ENCODE measurements at regions of chr11 and their contacts with region 1.

Region 1: DNA sequence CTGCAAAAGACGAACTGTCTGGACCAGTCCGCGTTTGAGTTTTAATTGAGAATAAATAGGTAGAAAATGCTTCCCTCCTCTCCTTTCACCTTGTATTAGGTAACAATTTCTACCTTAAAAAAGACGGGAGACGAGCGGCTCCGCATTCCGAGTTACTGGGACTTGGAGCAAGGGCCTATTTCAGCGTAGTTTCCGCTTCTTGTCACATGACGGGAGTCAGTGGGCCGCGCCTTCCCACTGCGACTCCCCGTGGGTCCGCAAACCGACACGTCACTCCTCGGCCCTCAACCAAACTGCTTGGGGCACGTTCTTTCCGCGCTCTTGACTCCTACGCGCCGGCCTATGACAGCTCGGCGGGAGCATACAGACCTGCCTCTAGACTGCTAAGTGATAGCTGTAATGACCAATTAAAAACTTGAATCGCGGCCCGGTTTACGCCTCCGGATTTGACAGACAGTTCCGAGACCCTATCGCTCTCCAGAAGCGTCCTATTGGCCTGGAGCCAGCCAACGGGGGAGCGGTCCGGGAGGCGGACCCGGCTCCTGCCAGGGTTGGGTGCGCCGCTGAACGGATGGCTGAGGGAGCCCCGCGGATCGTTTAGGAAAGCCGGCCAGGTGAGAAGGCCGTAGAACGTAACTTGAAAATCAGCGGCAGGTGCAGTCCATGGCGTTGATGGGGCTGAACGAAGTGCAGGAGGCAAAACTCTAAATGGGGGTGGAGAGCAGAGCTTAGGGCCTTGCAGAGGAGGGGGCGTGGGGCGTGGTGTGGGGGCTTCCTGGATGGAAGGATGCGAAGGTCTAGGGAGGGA is at the start of gene STT3A:
- DNase-seq: peak; percentile 100
- H3K4me3 ChIP-seq: peak within 1 kb of the TSS; percentile 77 to 82
- H3K27ac ChIP-seq: peak within 1 kb of the TSS; percentile 92 to 93
- H3K4me1 ChIP-seq: no peaks in the 10 kb centered on the region
- H3K27me3 ChIP-seq: no peaks in the 10 kb centered on the region
- CTCF ChIP-seq: no peak
- POLR2A ChIP-seq: peak; percentile 96
- total RNA-seq, gene STT3A: 90.1 to 124 TPM

Region 2: GRCh38 chr11:125111343-125112207 is 480.9 kb before region 1 on chr11 and contains the start of gene TMEM218:
- intact Hi-C with region 1: loop called (anchors 5 kb)
- DNase-seq: peak; percentile 98
- H3K4me3 ChIP-seq: peak within 1 kb of the TSS; percentile 66 to 93
- H3K27ac ChIP-seq: peak within 1 kb of the TSS; percentile 74 to 88
- H3K4me1 ChIP-seq: peaks cover 3% of the 10 kb centered on the region
- H3K27me3 ChIP-seq: no peaks in the 10 kb centered on the region
- CTCF ChIP-seq: no peak
- POLR2A ChIP-seq: no peak
- total RNA-seq, gene TMEM218: 17.7 to 33.5 TPM

Region 3: DNA sequence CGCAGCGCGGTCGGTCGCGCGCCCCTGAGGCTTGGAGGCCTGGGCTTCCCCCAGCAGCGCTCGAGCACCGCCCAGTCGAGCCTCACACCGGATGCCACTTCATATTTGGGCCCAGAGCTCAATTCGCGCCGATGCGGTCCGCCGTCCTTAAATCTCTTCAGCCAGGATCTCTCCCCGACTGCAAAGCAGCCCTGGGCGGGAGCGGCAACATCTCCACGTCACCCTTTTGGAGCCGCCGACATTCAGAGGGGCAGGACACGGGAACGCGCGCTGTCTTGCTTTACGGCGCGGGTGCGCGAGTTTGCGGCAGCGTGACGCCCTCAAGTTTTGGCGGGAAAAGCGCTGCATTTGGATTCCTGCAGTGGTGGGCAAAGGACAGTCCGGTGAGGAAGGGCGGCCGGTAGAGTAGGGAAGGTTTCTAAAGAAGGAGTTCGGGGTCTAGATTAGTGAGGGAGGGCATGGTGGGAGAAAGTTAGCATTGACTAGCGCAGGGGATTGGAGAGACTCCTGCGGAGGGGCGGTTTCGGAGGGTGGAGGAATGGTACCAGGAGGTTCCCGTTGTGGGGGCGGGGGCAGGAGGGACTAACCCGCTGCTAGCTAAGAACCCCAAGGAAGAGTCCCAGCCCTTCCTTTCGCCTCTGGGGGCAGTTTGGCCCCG is 33.2 kb after region 1 on chr11:
- intact Hi-C with region 1: loop called (anchors 1 kb)
- DNase-seq: peak; percentile 82
- H3K4me3 ChIP-seq: peak overlapping the region; percentile 63 to 66
- H3K27ac ChIP-seq: peak overlapping the region; percentile 94
- H3K4me1 ChIP-seq: no peaks in the 10 kb centered on the region
- H3K27me3 ChIP-seq: no peaks in the 10 kb centered on the region
- CTCF ChIP-seq: peak in 1 of 4 experiments; percentile 15
- POLR2A ChIP-seq: peak; percentile 76

Region 4: GRCh38 chr11:125887373-125888324 is 295.1 kb after region 1 on chr11 and contains the start of gene HYLS1:
- intact Hi-C with region 1: loop called (anchors 5 kb)
- DNase-seq: peak; percentile 92
- H3K4me3 ChIP-seq: peak within 1 kb of the TSS; percentile 62 to 89
- H3K27ac ChIP-seq: peak within 1 kb of the TSS; percentile 89 to 94
- H3K4me1 ChIP-seq: peaks cover 6% of the 10 kb centered on the region
- H3K27me3 ChIP-seq: no peaks in the 10 kb centered on the region
- CTCF ChIP-seq: peak in 1 of 4 experiments; percentile 50
- POLR2A ChIP-seq: peak; percentile 59
- total RNA-seq, gene HYLS1: 4.4 to 6.5 TPM

Measured in prostate gland (tissue), 2 donors.